ENCODE measurements at regions of chr16 and their contacts with region 1.

Region 1: GRCh38 chr16:7722761-7723160 is 390.1 kb downstream of the RBFOX1 start:
- DNase-seq: no peak
- ATAC-seq: no peak
- H3K4me3 ChIP-seq: no peak overlapping the region
- H3K27ac ChIP-seq: no peak overlapping the region
- H3K4me1 ChIP-seq: no peaks in the 10 kb centered on the region
- H3K27me3 ChIP-seq: no peaks in the 10 kb centered on the region
- CTCF ChIP-seq: no peak

Region 2: GRCh38 chr16:7602291-7602950 is 120.3 kb before region 1 on chr16:
- intact Hi-C with region 1: no loop called
- DNase-seq: no peak
- ATAC-seq: no peak
- H3K4me3 ChIP-seq: no peak overlapping the region
- H3K27ac ChIP-seq: peak overlapping the region in 5 of 10 donors; percentile 8 to 59 (median 42)
- H3K4me1 ChIP-seq: peaks cover 0 to 40% (median 7%) of the 10 kb centered on the region in 9 donors
- H3K27me3 ChIP-seq: no peaks in the 10 kb centered on the region
- CTCF ChIP-seq: no peak

Region 3: DNA sequence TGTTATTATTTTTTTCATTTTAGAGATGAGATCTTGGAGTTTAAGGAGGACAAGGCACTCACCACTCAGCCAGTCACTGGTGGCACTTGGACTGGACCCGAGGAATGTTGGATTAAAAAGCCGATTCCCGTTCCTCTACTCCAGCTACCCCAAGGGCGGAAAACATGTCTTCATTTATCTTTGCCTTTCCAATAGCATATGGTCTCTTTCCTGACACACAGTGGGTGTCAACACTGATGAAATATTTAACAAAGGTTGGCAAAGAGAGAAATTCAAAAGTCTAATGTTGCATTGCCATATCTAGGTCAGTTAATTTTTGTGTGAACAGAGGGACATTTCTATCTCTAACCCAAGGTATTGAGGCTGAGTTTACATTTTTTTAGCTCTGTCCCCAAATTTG is 69.6 kb after region 1 on chr16:
- intact Hi-C with region 1: loop called in 1 of 10 experiments (anchors 10 kb)
- DNase-seq: no peak
- ATAC-seq: no peak
- H3K4me3 ChIP-seq: no peak overlapping the region
- H3K27ac ChIP-seq: no peak overlapping the region
- H3K4me1 ChIP-seq: no peaks in the 10 kb centered on the region
- H3K27me3 ChIP-seq: peaks cover 0 to 10% (median 0%) of the 10 kb centered on the region in 7 donors
- CTCF ChIP-seq: no peak

Region 4: GRCh38 chr16:8063159-8063558 is 340.4 kb after region 1 on chr16:
- intact Hi-C with region 1: no loop called
- DNase-seq: no peak
- ATAC-seq: no peak
- H3K4me3 ChIP-seq: no peak overlapping the region
- H3K27ac ChIP-seq: no peak overlapping the region
- H3K4me1 ChIP-seq: no peaks in the 10 kb centered on the region
- H3K27me3 ChIP-seq: no peaks in the 10 kb centered on the region
- CTCF ChIP-seq: no peak